Motor neuron (in vitro differentiated cells): ENCODE measurements at regions of chr2 and their contacts with region 1.

Region 1: GRCh38 chr2:217713395-217714286 is 289.2 kb downstream of the TNS1 start:
- ATAC-seq: peak; percentile 6 to 61 (median 50)
- H3K4me3 ChIP-seq: no peak overlapping the region
- H3K27ac ChIP-seq: no peak overlapping the region
- H3K4me1 ChIP-seq: peaks cover 10 to 16% of the 10 kb centered on the region in 2 donors

Region 2: DNA sequence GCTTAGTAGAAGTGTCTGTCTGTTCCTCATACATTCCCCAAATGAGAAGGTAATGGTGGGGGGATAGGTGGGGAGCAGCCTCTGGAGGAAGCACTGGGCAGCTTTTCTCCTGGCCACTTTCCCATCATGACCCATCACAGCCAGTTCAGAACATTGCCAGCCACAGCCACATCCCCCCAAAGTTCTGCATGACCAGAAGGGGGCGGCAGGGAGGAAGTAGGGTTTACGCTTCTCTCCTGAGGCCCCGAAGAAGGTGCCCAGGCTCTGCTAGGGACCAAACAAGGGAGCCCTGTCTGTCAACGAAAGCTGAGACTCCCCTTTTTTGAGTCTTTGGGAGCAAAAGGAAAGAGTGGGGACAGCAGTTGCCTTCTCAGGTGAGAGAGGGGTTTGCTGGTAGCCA is 1026.0 kb before region 1 on chr2:
- in situ Hi-C with region 1: loop called (anchors 10 to 25 kb)
- ATAC-seq: no peak
- H3K4me3 ChIP-seq: no peak overlapping the region
- H3K27ac ChIP-seq: no peak overlapping the region
- H3K4me1 ChIP-seq: peaks cover 19 to 22% of the 10 kb centered on the region in 2 donors

Region 3: GRCh38 chr2:217166241-217166850 is 547.3 kb before region 1 on chr2:
- in situ Hi-C with region 1: loop called in 1 of 9 experiments (anchors 25 kb)
- ATAC-seq: peak in 4 of 8 experiments; percentile 40 to 86 (median 76)
- H3K4me3 ChIP-seq: no peak overlapping the region
- H3K27ac ChIP-seq: no peak overlapping the region
- H3K4me1 ChIP-seq: peaks cover 21 to 24% of the 10 kb centered on the region in 2 donors

Region 4: GRCh38 chr2:217510771-217511291 is 202.8 kb before region 1 on chr2:
- in situ Hi-C with region 1: loop called in 1 of 9 experiments (anchors 25 kb)
- ATAC-seq: peak; percentile 85 to 98 (median 91)
- H3K4me3 ChIP-seq: no peak overlapping the region
- H3K27ac ChIP-seq: no peak overlapping the region
- H3K4me1 ChIP-seq: peaks cover 2 to 21% of the 10 kb centered on the region in 2 donors